MCF 10A (cell line): ENCODE measurements at regions of chr2 and their contacts with region 1.

Region 1: GRCh38 chr2:20106746-20107145 is 55.3 kb upstream of the LAPTM4A start:
- DNase-seq: peak; percentile 45
- H3K4me3 Mint-ChIP-seq: peak overlapping the region; percentile 68
- H3K27ac Mint-ChIP-seq: peak overlapping the region; percentile 40
- H3K4me1 Mint-ChIP-seq: peaks cover 17% of the 10 kb centered on the region
- H3K27me3 Mint-ChIP-seq: no peaks in the 10 kb centered on the region
- CTCF ChIP-seq: peak; percentile 40

Region 2: DNA sequence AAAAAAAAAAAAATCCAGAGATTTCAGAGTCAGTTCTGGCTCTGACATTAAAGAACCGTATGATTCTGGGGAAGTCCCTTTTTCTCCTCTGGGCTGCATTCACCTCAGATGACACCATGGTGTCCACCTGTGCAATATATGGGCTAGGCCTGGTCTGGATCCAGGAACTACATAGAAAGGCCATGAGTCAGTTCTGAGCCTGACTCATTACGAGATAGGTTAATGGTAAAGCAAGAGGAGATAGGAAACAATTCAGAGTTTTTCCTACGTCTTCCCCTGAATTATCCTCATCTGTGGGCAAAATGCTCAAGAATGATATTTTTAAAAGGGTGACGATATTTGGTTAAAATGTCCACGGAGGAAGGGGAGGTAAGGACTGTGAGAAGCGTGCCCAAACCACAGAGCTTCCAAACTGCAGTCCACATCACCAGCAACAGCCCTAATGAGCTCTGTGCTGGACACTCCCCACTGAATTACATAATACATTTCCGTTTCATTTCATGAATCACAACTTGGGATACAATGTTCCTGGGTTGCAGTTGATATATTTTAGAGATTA is 568.3 kb before region 1 on chr2:
- CTCF ChIA-PET with region 1: no interaction called
- POLR2A ChIA-PET with region 1: no interaction called
- intact Hi-C with region 1: no loop called
- DNase-seq: peak; percentile 98
- H3K4me3 Mint-ChIP-seq: peak overlapping the region; percentile 50
- H3K27ac Mint-ChIP-seq: peak overlapping the region; percentile 93
- H3K4me1 Mint-ChIP-seq: peaks cover 57% of the 10 kb centered on the region
- H3K27me3 Mint-ChIP-seq: no peaks in the 10 kb centered on the region
- CTCF ChIP-seq: no peak

Region 3: DNA sequence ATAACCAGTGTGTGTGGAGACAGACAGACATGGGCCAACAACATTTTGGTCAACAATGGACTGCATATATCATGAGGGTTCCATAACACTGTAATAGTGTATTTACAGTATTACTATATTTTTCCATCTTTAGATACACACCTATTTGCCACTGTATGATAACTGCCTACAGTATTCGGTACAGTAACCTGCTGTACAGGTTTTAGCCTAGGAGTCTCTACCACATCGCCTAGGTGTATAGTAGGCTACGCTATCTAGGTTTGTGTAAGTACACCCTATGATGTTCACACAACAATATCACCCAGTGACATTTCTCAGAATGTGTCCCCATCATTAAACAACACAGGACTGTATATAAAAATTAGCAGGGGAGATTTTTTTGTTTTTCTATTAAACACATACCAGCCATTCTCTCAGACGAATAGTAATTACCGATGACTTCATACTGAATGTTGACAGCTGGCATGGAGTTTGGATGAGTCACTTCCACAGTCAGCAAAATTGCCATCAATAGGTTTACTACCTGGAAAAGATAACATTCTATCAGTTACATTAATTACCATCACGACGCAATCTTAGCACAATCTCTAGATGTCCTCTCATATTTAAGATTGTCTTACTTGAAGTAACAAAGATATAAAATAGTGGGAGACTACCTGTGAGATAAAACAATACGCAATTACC is 66.1 kb before region 1 on chr2:
- CTCF ChIA-PET with region 1: no interaction called
- POLR2A ChIA-PET with region 1: no interaction called
- intact Hi-C with region 1: no loop called
- DNase-seq: peak; percentile 47
- H3K4me3 Mint-ChIP-seq: no peak overlapping the region
- H3K27ac Mint-ChIP-seq: peak overlapping the region; percentile 47
- H3K4me1 Mint-ChIP-seq: peaks cover 20% of the 10 kb centered on the region
- H3K27me3 Mint-ChIP-seq: no peaks in the 10 kb centered on the region
- CTCF ChIP-seq: no peak

Region 4: DNA sequence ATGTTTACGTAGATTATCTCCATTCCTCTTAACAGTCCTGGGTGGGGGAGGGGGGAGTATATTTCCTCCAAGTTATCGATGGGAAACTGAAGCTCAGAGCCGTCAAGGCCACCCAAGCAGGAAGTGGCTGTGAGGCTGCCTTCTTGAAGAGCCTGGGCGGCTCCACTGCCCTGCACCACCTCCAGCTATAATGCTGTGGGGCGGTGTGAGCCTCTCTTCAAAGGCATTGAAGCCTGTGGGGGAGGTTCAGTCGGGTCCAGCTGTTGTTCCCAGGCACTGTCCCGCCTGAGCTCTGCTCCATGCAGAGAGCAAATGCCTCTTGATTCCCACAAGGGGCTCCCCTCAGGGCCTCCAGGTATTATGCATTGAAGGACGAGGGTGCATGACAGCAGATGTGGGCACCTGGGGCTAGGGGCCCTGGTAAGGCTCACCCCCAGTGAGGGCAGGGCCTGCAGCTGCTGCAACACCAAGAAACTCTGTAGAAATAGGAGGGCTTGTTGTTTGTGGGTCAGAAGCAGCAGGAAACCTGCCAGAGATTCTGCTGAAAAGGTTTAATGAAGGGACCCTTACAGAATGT is 25.8 kb before region 1 on chr2:
- CTCF ChIA-PET with region 1: no interaction called
- POLR2A ChIA-PET with region 1: no interaction called
- intact Hi-C with region 1: no loop called
- DNase-seq: no peak
- H3K4me3 Mint-ChIP-seq: no peak overlapping the region
- H3K27ac Mint-ChIP-seq: no peak overlapping the region
- H3K4me1 Mint-ChIP-seq: no peaks in the 10 kb centered on the region
- H3K27me3 Mint-ChIP-seq: no peaks in the 10 kb centered on the region
- CTCF ChIP-seq: no peak

Region 5: DNA sequence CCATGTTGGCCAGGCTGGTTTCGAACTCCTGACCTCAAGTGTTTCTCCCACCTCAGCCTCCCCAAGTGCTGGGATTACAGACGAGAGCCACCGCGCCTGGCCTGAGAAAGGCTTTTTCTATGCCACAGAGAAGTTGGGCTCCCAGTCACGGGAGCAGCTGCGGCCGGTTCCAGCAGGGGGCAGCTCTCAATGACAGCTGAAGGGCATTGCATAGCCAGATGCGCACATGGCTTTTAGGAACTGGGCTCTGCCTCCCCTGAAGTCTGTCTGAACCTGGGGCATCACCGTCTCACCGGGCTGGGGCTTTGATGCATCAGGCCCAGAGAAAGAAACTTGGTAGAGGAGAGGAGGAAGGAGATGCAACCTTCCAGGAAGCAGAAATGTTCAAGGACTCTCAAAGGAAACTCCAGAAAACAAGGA is 28.9 kb after region 1 on chr2:
- CTCF ChIA-PET with region 1: interaction called, 15 read pairs
- POLR2A ChIA-PET with region 1: no interaction called
- intact Hi-C with region 1: no loop called
- DNase-seq: peak; percentile 68
- H3K4me3 Mint-ChIP-seq: no peak overlapping the region
- H3K27ac Mint-ChIP-seq: no peak overlapping the region
- H3K4me1 Mint-ChIP-seq: peaks cover 21% of the 10 kb centered on the region
- H3K27me3 Mint-ChIP-seq: no peaks in the 10 kb centered on the region
- CTCF ChIP-seq: peak; percentile 72

Region 6: GRCh38 chr2:20190876-20191713 is 84.3 kb after region 1 on chr2:
- CTCF ChIA-PET with region 1: interaction called, 18 read pairs
- POLR2A ChIA-PET with region 1: no interaction called
- intact Hi-C with region 1: no loop called
- DNase-seq: peak; percentile 61
- H3K4me3 Mint-ChIP-seq: no peak overlapping the region
- H3K27ac Mint-ChIP-seq: no peak overlapping the region
- H3K4me1 Mint-ChIP-seq: no peaks in the 10 kb centered on the region
- H3K27me3 Mint-ChIP-seq: no peaks in the 10 kb centered on the region
- CTCF ChIP-seq: peak; percentile 39

Region 7: GRCh38 chr2:20212459-20212870 is 105.7 kb after region 1 on chr2:
- CTCF ChIA-PET with region 1: interaction called, 16 read pairs
- POLR2A ChIA-PET with region 1: interaction called, 6 read pairs
- intact Hi-C with region 1: no loop called
- DNase-seq: peak; percentile 90
- H3K4me3 Mint-ChIP-seq: peak overlapping the region; percentile 59
- H3K27ac Mint-ChIP-seq: peak overlapping the region; percentile 88
- H3K4me1 Mint-ChIP-seq: peaks cover 73% of the 10 kb centered on the region
- H3K27me3 Mint-ChIP-seq: no peaks in the 10 kb centered on the region
- CTCF ChIP-seq: no peak

Region 8: DNA sequence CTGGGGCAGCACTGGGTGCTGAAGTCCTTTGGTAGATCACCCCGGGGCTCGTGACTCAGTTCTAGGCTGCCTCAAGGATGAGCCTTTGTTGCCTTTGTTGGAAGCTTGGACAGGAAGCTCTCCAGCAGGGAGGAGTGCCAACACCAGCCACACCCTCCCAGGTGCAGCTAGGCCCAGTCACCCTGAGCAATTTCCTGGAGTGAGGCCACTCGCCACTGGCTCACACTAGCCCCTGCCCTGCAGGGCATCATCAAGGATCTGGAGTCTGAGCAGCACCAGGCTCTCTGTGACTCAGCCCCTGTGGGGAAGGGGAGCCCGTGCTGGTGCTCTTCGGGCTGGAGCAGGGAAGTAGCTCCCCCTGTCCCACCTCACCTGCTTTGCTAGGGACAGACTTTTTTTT is 124.9 kb after region 1 on chr2:
- CTCF ChIA-PET with region 1: interaction called, 140 read pairs
- POLR2A ChIA-PET with region 1: interaction called, 39 read pairs
- intact Hi-C with region 1: no loop called
- DNase-seq: peak; percentile 99
- H3K4me3 Mint-ChIP-seq: peak overlapping the region; percentile 43
- H3K27ac Mint-ChIP-seq: peak overlapping the region; percentile 81
- H3K4me1 Mint-ChIP-seq: peaks cover 46% of the 10 kb centered on the region
- H3K27me3 Mint-ChIP-seq: no peaks in the 10 kb centered on the region
- CTCF ChIP-seq: no peak

Region 9: DNA sequence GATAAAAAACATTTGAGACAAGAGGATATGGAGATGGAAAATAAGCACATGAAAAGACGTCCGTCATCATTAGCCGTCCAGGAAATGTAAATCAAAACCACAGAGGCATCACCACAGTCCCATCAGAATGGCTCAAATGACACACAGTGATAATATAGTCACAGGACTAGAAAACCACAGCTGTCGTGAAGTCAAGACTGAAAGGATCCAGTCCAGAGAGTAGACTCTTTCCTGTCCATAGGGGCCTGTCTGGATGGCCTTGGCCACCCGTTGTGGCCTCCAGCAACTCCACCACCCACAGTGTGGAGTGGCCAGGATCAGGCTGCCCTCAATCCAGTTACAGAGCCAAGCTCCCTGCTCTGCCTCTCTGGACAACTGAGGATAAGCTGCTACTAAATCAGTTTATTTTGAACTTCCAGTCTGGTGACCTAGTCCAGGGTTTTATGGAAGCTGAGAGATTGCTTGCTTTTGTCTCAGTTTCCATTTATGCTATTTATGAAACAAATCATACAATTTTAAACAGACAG is 400.5 kb after region 1 on chr2:
- CTCF ChIA-PET with region 1: no interaction called
- POLR2A ChIA-PET with region 1: no interaction called
- intact Hi-C with region 1: no loop called
- DNase-seq: no peak
- H3K4me3 Mint-ChIP-seq: no peak overlapping the region
- H3K27ac Mint-ChIP-seq: no peak overlapping the region
- H3K4me1 Mint-ChIP-seq: peaks cover 35% of the 10 kb centered on the region
- H3K27me3 Mint-ChIP-seq: no peaks in the 10 kb centered on the region
- CTCF ChIP-seq: no peak